OCI-LY7 (cell line): ENCODE measurements at regions of chr10 and their contacts with region 1.

Region 1: DNA sequence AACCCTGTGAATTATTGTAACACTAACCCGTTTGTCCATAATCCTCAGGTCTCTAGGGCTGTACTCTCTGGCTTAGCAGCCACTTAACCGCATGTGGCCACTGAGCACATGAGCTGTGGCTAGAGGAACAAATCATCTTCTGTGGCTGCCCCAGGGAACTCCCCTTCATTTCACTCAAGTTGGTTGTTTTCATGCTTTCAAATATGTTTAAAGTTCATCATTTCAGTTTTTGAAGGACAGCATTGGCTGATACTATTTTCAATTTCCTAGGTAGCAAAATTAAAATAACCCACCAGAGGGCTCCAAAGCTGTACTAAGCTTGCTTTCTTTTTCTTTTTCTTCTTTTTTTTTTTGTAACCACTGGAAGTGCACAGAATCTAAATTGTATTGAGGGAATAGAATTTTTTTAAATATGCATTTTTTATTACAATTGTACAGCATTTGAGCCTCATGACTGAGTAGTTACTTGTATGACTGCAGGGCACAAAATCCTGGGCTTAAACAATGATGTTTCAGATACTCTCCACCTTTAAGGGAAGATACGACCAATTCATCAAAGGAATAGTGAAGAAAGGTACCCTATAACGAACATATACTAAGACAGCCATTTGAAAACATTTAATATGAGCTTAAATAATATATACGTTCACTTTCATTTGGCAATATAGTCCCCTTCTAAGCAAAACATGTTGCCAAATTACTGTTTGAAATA is 38.6 kb downstream of the MRC1 start:
- DNase-seq: peak; percentile 11
- H3K4me3 ChIP-seq: no peak overlapping the region
- H3K27ac ChIP-seq: no peak overlapping the region
- H3K4me1 ChIP-seq: no peaks in the 10 kb centered on the region
- CTCF ChIP-seq: peak; percentile 58

Region 2: GRCh38 chr10:17989908-17990767 is 142.4 kb after region 1 on chr10:
- CTCF ChIA-PET with region 1: no interaction called
- POLR2A ChIA-PET with region 1: no interaction called
- intact Hi-C with region 1: no loop called
- DNase-seq: peak; percentile 25
- H3K4me3 ChIP-seq: no peak overlapping the region
- H3K27ac ChIP-seq: no peak overlapping the region
- H3K4me1 ChIP-seq: peaks cover 7% of the 10 kb centered on the region
- CTCF ChIP-seq: no peak

Region 3: DNA sequence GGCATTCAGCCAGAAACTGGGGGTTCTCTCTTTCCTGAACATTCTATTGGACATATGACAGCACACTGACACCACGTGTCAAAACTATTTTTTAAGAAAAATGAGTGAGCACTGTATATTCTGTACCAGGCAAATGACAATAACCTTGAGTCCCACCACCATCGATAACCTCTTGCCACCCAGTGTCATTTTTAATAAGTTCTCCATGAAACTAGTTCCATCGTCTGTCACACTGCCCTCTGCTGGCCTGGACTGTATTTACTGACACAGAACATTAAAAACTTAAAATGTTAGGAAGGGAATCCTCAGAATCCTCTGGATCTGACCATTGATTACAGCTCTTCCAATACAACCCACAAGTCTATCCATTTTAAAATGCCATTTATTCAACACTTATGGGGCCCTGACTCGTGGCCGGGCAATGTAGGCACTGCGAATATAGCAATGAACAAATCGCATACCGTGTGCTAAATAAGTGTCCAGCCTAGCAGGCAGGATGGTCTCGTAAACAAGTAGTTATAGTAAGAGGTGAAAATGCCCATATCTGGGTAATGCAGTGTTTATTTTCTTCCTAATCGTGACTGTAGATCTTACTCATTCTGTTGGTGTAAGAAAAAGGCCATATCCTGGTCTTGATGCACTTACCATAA is 256.6 kb after region 1 on chr10:
- CTCF ChIA-PET with region 1: no interaction called
- POLR2A ChIA-PET with region 1: no interaction called
- intact Hi-C with region 1: loop called (anchors 10 kb)
- DNase-seq: peak; percentile 39
- H3K4me3 ChIP-seq: no peak overlapping the region
- H3K27ac ChIP-seq: no peak overlapping the region
- H3K4me1 ChIP-seq: no peaks in the 10 kb centered on the region
- CTCF ChIP-seq: peak; percentile 91

Region 4: GRCh38 chr10:18214691-18215563 is 367.2 kb after region 1 on chr10:
- CTCF ChIA-PET with region 1: no interaction called
- POLR2A ChIA-PET with region 1: interaction called, 3 read pairs
- intact Hi-C with region 1: loop called (anchors 10 kb)
- DNase-seq: peak; percentile 6
- H3K4me3 ChIP-seq: no peak overlapping the region
- H3K27ac ChIP-seq: no peak overlapping the region
- H3K4me1 ChIP-seq: no peaks in the 10 kb centered on the region
- CTCF ChIP-seq: peak; percentile 67